Activated T-helper 2 cell treated with anti-CD3 and anti-CD28 coated beads, Interferon-gamma antibody, Interleukin-2, Interleukin-4, amounts not matched to agents 10 μg/mL and 5 μg/mL and 100 μg/mL, durations not matched to agents 14 hours and 24 hours and 36 hours (primary cell): ENCODE measurements at regions of chr14 and their contacts with region 1.

Region 1: DNA sequence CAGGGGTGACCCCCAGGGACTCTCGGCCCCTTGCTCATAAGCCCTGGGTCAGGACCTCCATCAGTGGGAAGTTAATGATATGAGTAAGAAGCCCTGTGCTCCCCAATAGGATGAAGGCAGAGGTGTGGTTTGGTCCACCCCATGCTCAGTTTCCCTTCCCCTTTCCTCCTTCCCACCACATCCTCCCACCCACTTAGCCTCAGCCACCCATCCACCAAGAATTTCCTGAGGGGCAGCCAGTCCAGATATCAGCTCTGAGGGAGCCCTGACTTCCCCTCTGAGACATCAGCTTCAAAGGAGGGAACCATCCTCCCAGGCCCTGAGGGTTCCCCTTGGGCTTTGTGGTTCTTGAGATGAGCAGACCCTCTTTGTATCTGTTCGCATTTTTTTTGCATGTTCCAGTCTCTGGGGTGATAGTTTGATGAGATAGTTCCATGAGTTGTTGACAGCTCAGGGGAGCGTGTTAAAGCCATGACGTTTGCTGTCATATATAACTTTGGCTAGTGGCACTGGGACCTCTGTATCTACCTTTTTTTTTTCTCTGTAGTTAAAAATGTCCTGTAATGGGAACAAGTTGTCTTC is 71.2 kb downstream of the LGMN start:
- DNase-seq: no peak
- H3K4me3 Mint-ChIP-seq: no peak overlapping the region
- H3K27ac Mint-ChIP-seq: peak overlapping the region; percentile 58
- H3K4me1 Mint-ChIP-seq: peaks cover 41% of the 10 kb centered on the region
- H3K27me3 Mint-ChIP-seq: no peaks in the 10 kb centered on the region

Region 2: GRCh38 chr14:92121670-92122350 is 555.4 kb before region 1 on chr14 and contains the starts of genes CPSF2 and NDUFB1:
- intact Hi-C with region 1: loop called (anchors 10 kb)
- DNase-seq: peak; percentile 82
- H3K4me3 Mint-ChIP-seq: peak within 1 kb of the TSS; percentile 100
- H3K27ac Mint-ChIP-seq: peak within 1 kb of the TSS; percentile 100
- H3K4me1 Mint-ChIP-seq: peaks cover 30% of the 10 kb centered on the region
- H3K27me3 Mint-ChIP-seq: no peaks in the 10 kb centered on the region
- total RNA-seq, gene CPSF2: 101 and 104 TPM in 2 replicates
- total RNA-seq, gene NDUFB1: 77.3 and 78.6 TPM in 2 replicates

Region 3: DNA sequence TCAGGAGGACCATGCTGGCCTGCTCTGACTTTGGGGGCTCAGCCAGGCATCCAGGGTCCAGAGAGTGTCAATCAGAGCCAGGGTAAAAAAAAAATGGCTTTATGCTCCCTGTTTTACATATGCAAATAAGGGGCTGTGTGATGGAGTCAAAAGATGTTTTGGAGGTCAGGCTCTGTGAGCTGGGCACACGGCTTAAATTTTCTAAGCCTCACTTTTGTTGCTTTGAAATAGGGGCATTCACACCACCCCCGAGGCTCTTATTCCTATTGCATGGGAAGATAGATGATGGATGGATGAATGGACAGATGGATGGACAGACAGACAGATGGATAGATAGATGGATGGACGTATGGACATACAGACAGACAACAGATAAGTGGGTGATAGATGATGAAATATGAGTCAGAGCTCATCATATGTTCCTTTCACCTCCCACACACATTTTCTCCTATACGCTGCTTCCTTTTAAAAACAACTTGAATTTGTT is 120.9 kb before region 1 on chr14:
- intact Hi-C with region 1: loop called (anchors 1 kb)
- DNase-seq: no peak
- H3K4me3 Mint-ChIP-seq: no peak overlapping the region
- H3K27ac Mint-ChIP-seq: peak overlapping the region; percentile 74
- H3K4me1 Mint-ChIP-seq: peaks cover 51% of the 10 kb centered on the region
- H3K27me3 Mint-ChIP-seq: peaks cover 45% of the 10 kb centered on the region

Region 4: DNA sequence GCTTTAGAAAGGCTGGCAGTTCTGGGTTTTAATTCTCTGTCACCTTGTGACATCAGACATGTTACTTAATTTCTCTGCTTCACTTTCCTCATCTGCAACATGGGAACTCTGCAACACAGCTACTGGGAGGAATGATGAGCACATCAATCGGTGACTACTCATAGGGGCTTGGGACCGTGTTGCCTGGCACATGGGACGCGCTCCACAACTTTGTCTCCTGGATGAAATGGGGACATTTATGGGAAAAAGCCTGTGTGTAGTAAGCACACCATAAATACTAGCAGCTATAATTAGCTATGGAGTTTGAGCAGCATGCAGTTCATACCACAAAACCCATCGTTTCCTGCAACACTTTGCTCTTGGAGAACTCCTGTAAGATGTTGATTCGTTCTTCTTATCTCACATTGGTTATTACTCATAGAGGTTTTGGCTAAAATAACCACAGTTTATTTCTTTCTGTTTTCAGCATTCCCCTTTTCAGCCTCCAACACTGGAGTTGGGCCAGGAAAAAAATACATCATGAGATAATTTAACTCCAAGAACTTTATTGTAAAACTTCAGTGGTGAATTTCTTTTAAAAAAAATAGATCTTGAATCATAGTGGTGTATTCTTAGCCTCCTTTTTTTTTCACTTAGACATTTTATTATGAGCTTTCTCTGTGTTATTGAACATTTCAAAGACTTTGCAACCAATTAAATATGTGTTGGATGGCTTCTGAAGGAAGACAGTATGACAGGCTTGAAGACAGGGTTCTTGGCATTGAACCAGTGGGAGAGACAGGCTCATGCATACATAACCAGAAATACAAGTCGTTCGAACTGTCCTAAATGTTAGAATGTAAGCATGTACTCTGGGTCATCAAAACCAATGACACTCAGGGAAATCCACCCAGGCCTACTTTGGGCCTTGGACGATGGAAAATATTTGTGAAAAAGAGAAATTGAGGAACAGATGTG is 90.9 kb before region 1 on chr14:
- intact Hi-C with region 1: loop called (anchors 1 kb)
- DNase-seq: peak; percentile 44
- H3K4me3 Mint-ChIP-seq: peak overlapping the region; percentile 49
- H3K27ac Mint-ChIP-seq: peak overlapping the region; percentile 65
- H3K4me1 Mint-ChIP-seq: peaks cover 63% of the 10 kb centered on the region
- H3K27me3 Mint-ChIP-seq: peaks cover 43% of the 10 kb centered on the region

Region 5: DNA sequence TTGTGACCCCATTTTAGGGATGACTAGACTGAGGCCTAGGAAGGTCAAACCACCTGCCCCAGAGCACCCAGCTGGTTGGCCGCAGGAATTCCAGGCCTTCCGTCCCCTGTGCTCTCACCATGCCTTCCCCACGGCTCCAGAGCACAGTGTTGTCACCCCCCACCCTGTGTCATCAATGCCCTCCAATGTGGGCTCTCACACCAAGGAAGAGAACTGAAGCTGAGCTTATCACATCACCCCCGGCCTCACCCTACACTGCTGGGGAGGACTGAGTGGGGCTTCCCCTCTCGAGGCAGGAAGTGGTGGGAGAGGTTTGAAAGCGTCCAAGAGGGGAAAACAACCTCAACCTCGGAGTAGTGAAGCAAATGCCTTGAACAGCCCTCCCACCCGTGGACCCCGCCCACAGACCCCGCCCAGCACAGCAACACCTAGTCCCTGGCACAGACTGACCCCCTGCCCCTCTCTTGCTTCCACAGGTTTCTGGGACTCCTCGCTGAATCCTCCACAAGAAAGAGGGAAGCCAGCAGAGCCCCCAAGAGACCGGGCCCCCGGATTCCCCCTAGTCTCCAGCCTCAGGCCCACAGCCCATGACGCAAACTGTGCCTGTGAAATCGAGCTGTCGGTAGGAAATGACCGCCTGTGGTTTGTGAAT is 25.9 kb before region 1 on chr14:
- intact Hi-C with region 1: loop called (anchors 1 kb)
- DNase-seq: peak; percentile 76
- H3K4me3 Mint-ChIP-seq: peak overlapping the region; percentile 91
- H3K27ac Mint-ChIP-seq: peak overlapping the region; percentile 95
- H3K4me1 Mint-ChIP-seq: peaks cover 76% of the 10 kb centered on the region
- H3K27me3 Mint-ChIP-seq: no peaks in the 10 kb centered on the region